ENCODE measurements at regions of chr2 and their contacts with region 1.

Region 1: GRCh38 chr2:177164584-177165052 is 48.0 kb upstream of the HNRNPA3 start:
- DNase-seq: peak; percentile 75 to 87
- H3K4me3 ChIP-seq: peak overlapping the region; percentile 37; the same call in 1 of the 2 replicates
- H3K27ac ChIP-seq: peak overlapping the region; percentile 65
- H3K4me1 ChIP-seq: peaks cover 55% of the 10 kb centered on the region
- H3K27me3 ChIP-seq: no peaks in the 10 kb centered on the region
- CTCF ChIP-seq: peak; percentile 100

Region 2: GRCh38 chr2:176126929-176127773 is 1037.5 kb before region 1 on chr2:
- CTCF ChIA-PET with region 1: no interaction called
- POLR2A ChIA-PET with region 1: interaction called, 3 read pairs
- intact Hi-C with region 1: loop called (anchors 2 kb)
- DNase-seq: peak; percentile 43 to 67
- H3K4me3 ChIP-seq: 0 out of 2 replicates have a peak overlapping the region, but pooled peaks have one; percentile 3
- H3K27ac ChIP-seq: no peak overlapping the region
- H3K4me1 ChIP-seq: no peaks in the 10 kb centered on the region
- H3K27me3 ChIP-seq: peaks cover 52% of the 10 kb centered on the region
- CTCF ChIP-seq: peak; percentile 100

Region 3: GRCh38 chr2:177212106-177212890 is 47.7 kb after region 1 on chr2 and contains the start of gene HNRNPA3:
- CTCF ChIA-PET with region 1: interaction called, 10 read pairs
- POLR2A ChIA-PET with region 1: interaction called, 31 read pairs
- intact Hi-C with region 1: no loop called
- DNase-seq: peak; percentile 98 to 100
- H3K4me3 ChIP-seq: peak within 1 kb of the TSS; percentile 76
- H3K27ac ChIP-seq: peak within 1 kb of the TSS; percentile 97
- H3K4me1 ChIP-seq: peaks cover 30% of the 10 kb centered on the region
- H3K27me3 ChIP-seq: no peaks in the 10 kb centered on the region
- CTCF ChIP-seq: peak; percentile 27; the same call in 1 of the 2 replicates
- total RNA-seq, gene HNRNPA3: 245 and 290 TPM in 2 replicates

Region 4: GRCh38 chr2:177281400-177282180 is 117.0 kb after region 1 on chr2:
- CTCF ChIA-PET with region 1: interaction called, 4 read pairs
- POLR2A ChIA-PET with region 1: interaction called, 23 read pairs
- intact Hi-C with region 1: no loop called
- DNase-seq: no peak
- H3K4me3 ChIP-seq: no peak overlapping the region
- H3K27ac ChIP-seq: no peak overlapping the region
- H3K4me1 ChIP-seq: 0 out of 2 replicates have a peak, but pooled peaks cover 10% of the 10 kb centered on the region
- H3K27me3 ChIP-seq: no peaks in the 10 kb centered on the region
- CTCF ChIP-seq: no peak

Region 5: DNA sequence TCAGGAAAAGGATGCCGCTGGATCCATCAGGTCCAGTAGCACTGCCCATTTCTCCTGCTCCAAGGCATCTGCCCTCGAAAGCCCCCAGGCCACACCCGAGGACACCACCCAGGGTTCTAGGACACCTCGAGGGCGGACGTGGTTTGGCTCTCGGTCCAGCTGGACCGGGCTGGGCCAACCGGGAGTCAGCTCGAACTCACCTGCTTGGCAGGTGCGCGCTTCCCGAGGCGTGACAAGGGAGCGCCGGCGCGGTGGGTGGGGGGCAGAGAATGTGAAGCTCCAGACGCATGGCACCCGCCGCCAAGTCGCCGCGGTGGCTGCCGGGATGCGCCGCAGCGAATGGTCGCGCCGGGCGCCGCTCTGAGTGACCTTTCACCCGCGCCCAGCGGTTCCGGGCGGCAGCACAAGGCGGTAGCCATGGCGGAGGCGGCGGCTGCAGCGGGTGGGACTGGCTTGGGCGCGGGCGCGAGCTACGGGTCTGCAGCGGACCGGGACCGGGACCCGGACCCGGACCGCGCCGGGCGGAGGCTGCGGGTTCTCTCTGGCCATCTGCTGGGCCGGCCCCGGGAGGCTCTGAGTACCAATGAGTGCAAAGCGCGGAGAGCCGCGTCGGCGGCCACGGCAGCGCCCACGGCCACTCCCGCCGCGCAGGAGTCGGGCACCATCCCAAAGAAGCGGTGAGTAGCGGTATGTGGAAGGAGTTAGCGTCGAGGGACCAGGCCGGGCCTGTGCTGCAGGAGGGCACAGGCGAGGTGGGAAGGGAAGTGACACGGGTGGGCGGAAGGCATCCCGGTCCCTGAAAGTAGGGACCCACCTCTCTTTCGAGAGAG is 228.0 kb after region 1 on chr2 and contains the start of gene AGPS:
- CTCF ChIA-PET with region 1: interaction called, 3 read pairs
- POLR2A ChIA-PET with region 1: no interaction called
- intact Hi-C with region 1: loop called (anchors 2 kb)
- DNase-seq: peak; percentile 76 to 91
- H3K4me3 ChIP-seq: peak within 1 kb of the TSS; percentile 94
- H3K27ac ChIP-seq: peak within 1 kb of the TSS; percentile 62
- H3K4me1 ChIP-seq: peaks cover 54% of the 10 kb centered on the region
- H3K27me3 ChIP-seq: no peaks in the 10 kb centered on the region
- CTCF ChIP-seq: no peak
- total RNA-seq, gene AGPS: 101 and 107 TPM in 2 replicates

Region 6: DNA sequence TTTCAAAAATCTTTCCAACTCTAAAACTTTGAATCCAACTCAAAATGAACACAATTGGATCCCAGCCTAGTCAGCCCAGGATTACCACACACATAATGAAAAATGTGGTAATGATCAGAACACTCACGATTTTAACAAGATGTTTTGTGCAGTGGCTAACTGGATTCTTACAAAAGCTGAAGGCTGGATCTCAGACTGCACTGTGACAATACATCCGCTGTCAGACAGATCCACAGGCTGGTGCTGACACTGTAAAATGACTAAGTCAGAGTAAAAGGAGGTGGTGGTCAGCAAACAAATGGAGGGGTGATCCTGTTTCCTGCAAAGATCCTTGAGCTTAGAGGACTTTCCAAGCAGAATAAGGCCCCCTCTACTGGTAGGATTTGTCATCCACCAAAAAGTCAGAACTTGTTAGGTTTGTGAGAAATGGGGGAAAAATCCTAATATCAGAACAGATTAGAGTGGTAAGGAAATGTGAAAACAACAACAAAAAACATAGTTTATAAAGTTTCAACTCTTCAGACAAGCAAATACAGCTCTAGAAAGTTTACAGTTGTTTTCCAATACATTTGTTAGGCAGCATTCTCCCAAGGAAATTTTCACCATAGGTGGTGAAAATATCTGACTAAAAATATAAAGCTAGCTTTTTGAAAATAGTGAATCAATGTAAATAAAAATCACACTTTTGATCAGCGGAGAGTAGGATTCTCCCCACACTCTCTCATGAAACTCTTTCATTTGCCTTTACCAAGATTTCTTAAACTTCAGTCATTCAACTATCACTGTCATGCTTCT is 439.9 kb after region 1 on chr2:
- CTCF ChIA-PET with region 1: no interaction called
- POLR2A ChIA-PET with region 1: no interaction called
- intact Hi-C with region 1: loop called (anchors 5 kb)
- DNase-seq: peak in 1 of 2 experiments; percentile 16
- H3K4me3 ChIP-seq: no peak overlapping the region
- H3K27ac ChIP-seq: no peak overlapping the region
- H3K4me1 ChIP-seq: no peaks in the 10 kb centered on the region
- H3K27me3 ChIP-seq: no peaks in the 10 kb centered on the region
- CTCF ChIP-seq: peak; percentile 84